Heart left ventricle (tissue), 16 donors: ENCODE measurements at regions of chr2 and their contacts with region 1.

Region 1: GRCh38 chr2:5932556-5933469 is 240.6 kb downstream of the SOX11 start:
- DNase-seq: peak in 4 of 5 donors; percentile 51 to 79 (median 60)
- ATAC-seq: peak; percentile 92 to 97 (median 96)
- H3K4me3 ChIP-seq: peak overlapping the region in 10 of 12 donors; percentile 8 to 51 (median 30)
- H3K27ac ChIP-seq: peak overlapping the region in 1 of 12 donors; percentile 11
- H3K4me1 ChIP-seq: peaks cover 0 to under 1% (median 0%) of the 10 kb centered on the region in 12 donors
- H3K27me3 ChIP-seq: no peaks in the 10 kb centered on the region
- CTCF ChIP-seq: peak in 5 of 12 donors; percentile 9 to 37 (median 31)
- POLR2A ChIP-seq: no peak

Region 2: GRCh38 chr2:6352906-6353515 is 420.2 kb after region 1 on chr2:
- intact Hi-C with region 1: loop called in 1 of 10 experiments (anchors 10 kb)
- DNase-seq: peak; percentile 18 to 69 (median 47)
- ATAC-seq: peak in 3 of 4 donors; percentile 36 to 61 (median 53)
- H3K4me3 ChIP-seq: no peak overlapping the region
- H3K27ac ChIP-seq: no peak overlapping the region
- H3K4me1 ChIP-seq: no peaks in the 10 kb centered on the region
- H3K27me3 ChIP-seq: no peaks in the 10 kb centered on the region
- CTCF ChIP-seq: peak; percentile 40 to 75 (median 62)
- POLR2A ChIP-seq: no peak